Panc1 (cell line): ENCODE measurements at regions of chr4 and their contacts with region 1.

Region 1: GRCh38 chr4:103099691-103100392 is at the start of gene BDH2:
- DNase-seq: no peak
- ATAC-seq: peak; percentile 91
- H3K4me3 ChIP-seq: peak within 1 kb of the TSS; percentile 35 to 47
- H3K27ac ChIP-seq: peak within 1 kb of the TSS; percentile 54; the same call in 1 of the 2 replicates
- H3K4me1 ChIP-seq: no peaks in the 10 kb centered on the region; the same call in 1 of the 2 replicates
- H3K27me3 ChIP-seq: no peaks in the 10 kb centered on the region
- CTCF ChIP-seq: peak; percentile 72
- total RNA-seq, gene BDH2: 0.98 TPM

Region 2: DNA sequence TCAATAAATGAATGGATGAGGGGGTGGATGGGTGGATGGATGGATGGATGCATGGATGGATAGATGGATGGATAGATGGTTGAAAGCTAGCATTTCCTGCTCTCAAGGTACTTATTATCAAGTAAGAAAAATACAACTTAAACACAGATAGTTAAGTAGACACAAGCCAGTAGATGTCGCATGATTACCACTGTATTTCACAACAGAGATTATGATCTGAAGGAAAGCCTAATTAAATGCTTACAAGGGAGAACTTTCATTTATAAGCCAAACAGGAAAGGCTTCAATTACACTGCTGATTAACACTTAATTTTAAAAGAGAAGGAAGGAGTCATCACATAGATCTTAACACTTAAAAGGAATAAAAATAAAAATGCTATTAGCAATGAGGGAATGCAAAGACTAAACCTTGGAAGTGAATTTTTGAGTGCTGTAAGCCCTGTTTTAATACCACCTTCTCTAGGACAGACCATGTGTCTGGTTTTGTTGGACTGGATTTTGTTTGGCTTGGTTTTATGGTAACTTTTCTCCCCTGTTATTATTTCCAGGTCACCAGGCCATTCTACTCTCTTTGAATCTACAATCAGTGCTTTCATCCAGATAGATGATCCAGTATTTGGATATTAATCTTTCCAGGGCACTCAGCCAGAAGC is 679.1 kb before region 1 on chr4:
- CTCF ChIA-PET with region 1: no interaction called
- POLR2A ChIA-PET with region 1: no interaction called
- in situ Hi-C with region 1: no loop called
- intact Hi-C with region 1: loop called (anchors 10 kb)
- DNase-seq: no peak
- ATAC-seq: no peak
- H3K4me3 ChIP-seq: no peak overlapping the region
- H3K27ac ChIP-seq: no peak overlapping the region
- H3K4me1 ChIP-seq: no peaks in the 10 kb centered on the region
- H3K27me3 ChIP-seq: peaks cover 2% of the 10 kb centered on the region; the same call in 1 of the 2 replicates
- CTCF ChIP-seq: no peak; the same call in 1 of the 2 replicates

Region 3: GRCh38 chr4:102945066-102945465 is 154.8 kb before region 1 on chr4:
- CTCF ChIA-PET with region 1: no interaction called
- POLR2A ChIA-PET with region 1: no interaction called
- in situ Hi-C with region 1: no loop called
- intact Hi-C with region 1: no loop called
- DNase-seq: no peak
- ATAC-seq: no peak
- H3K4me3 ChIP-seq: no peak overlapping the region
- H3K27ac ChIP-seq: no peak overlapping the region
- H3K4me1 ChIP-seq: no peaks in the 10 kb centered on the region
- H3K27me3 ChIP-seq: no peaks in the 10 kb centered on the region
- CTCF ChIP-seq: no peak

Region 4: DNA sequence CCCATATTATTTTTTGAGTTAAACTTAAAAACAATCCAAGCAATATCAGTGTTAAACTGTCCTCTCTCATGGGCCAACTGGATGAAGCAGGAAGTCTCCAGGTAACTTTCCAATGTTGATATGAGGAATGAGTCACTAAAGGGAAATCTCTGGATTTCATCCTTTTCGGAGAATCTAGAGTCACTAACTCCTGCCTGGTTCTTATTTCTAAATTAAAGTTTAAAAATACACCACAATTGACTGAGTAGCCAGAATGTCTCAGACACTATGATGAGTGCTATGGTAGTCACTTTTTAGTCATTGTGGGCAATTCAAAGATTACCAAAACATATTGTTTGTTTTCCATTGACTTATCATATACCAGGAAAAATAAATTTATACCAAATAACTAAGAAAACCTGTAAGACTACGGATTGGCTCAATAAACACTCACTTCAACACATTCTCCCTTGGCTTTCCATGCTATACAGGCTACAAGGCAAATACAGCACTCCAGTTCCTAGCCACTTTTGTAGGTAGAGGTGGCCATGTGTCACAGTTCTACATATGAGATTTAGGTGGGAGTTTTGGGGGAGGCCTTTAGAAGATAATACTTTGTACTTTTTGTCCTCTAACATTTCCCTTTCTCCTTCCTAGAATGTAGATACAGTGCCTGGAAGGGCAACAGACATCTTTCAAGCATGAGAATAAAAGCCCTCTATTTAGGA is 31.8 kb before region 1 on chr4:
- CTCF ChIA-PET with region 1: no interaction called
- POLR2A ChIA-PET with region 1: no interaction called
- in situ Hi-C with region 1: no loop called
- intact Hi-C with region 1: no loop called
- DNase-seq: no peak
- ATAC-seq: no peak
- H3K4me3 ChIP-seq: no peak overlapping the region
- H3K27ac ChIP-seq: no peak overlapping the region
- H3K4me1 ChIP-seq: no peaks in the 10 kb centered on the region
- H3K27me3 ChIP-seq: no peaks in the 10 kb centered on the region
- CTCF ChIP-seq: no peak